Motor neuron (in vitro differentiated cells): ENCODE measurements at regions of chr13 and their contacts with region 1.

Region 1: GRCh38 chr13:61410669-61411297 is 4.9 kb downstream of the PCDH20 start:
- ATAC-seq: no peak
- H3K4me3 ChIP-seq: no peak overlapping the region
- H3K27ac ChIP-seq: no peak overlapping the region
- H3K4me1 ChIP-seq: peaks cover 6 to 7% of the 10 kb centered on the region in 2 donors

Region 2: GRCh38 chr13:60627071-60627686 is 783.6 kb before region 1 on chr13:
- in situ Hi-C with region 1: loop called in 1 of 9 experiments (anchors 25 kb)
- ATAC-seq: peak in 5 of 8 experiments; percentile 45 to 87 (median 68)
- H3K4me3 ChIP-seq: no peak overlapping the region
- H3K27ac ChIP-seq: no peak overlapping the region
- H3K4me1 ChIP-seq: no peaks in the 10 kb centered on the region

Region 3: GRCh38 chr13:60654415-60654814 is 756.4 kb before region 1 on chr13:
- in situ Hi-C with region 1: loop called in 2 of 9 experiments (anchors 25 kb)
- ATAC-seq: peak in 4 of 8 experiments; percentile 14 to 76 (median 70)
- H3K4me3 ChIP-seq: no peak overlapping the region
- H3K27ac ChIP-seq: no peak overlapping the region
- H3K4me1 ChIP-seq: no peaks in the 10 kb centered on the region

Region 4: GRCh38 chr13:61261746-61262472 is 148.9 kb before region 1 on chr13:
- in situ Hi-C with region 1: no loop called
- ATAC-seq: peak in 1 of 8 experiments; percentile 18
- H3K4me3 ChIP-seq: no peak overlapping the region
- H3K27ac ChIP-seq: no peak overlapping the region
- H3K4me1 ChIP-seq: no peaks in the 10 kb centered on the region